Right ventricle myocardium superior (tissue), 1 donor: ENCODE measurements at regions of chr3 and their contacts with region 1.

Region 1: DNA sequence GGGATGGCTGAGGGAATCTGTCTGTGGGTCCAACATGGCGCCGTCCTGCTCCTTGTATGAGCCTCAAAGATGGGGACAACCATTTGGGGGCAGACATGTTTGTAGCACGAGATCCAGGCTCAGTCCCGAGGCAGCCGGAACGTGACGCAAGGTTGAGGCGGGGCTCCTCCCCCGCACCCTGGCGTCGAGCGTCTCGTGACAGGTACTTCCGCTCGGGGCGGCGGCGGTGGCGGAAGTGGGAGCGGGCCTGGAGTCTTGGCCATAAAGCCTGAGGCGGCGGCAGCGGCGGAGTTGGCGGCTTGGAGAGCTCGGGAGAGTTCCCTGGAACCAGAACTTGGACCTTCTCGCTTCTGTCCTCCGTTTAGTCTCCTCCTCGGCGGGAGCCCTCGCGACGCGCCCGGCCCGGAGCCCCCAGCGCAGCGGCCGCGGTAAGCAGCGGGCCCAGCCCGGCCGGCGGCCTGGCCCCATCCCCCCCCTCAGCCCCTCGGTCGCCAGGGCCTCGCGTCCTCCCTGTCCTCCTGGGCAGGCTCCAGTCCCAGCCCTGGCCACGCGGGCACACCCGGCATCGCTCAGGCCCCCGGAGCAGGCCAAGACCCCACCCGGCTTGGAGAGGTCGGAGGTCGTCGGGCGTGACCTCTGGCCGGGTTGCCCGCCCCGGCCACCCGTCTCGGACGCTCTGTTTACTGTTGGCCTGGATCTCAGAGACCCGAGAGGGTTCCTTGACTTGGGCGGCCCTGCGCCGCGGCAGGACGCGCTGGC is at the start of gene RAB7A:
- DNase-seq: peak; percentile 99
- ATAC-seq: peak; percentile 98
- total RNA-seq, gene RAB7A: 240 TPM

Region 2: GRCh38 chr3:128297401-128298138 is 428.5 kb before region 1 on chr3:
- intact Hi-C with region 1: no loop called
- DNase-seq: no peak
- ATAC-seq: peak; percentile 67

Region 3: GRCh38 chr3:128369864-128370642 is 356.1 kb before region 1 on chr3:
- intact Hi-C with region 1: no loop called
- DNase-seq: no peak
- ATAC-seq: peak; percentile 6

Region 4: GRCh38 chr3:128794770-128795649 is 68.9 kb after region 1 on chr3:
- intact Hi-C with region 1: loop called (anchors 10 kb)
- DNase-seq: no peak
- ATAC-seq: peak; percentile 89